ENCODE measurements at regions of chr1 and their contacts with region 1.

Region 1: DNA sequence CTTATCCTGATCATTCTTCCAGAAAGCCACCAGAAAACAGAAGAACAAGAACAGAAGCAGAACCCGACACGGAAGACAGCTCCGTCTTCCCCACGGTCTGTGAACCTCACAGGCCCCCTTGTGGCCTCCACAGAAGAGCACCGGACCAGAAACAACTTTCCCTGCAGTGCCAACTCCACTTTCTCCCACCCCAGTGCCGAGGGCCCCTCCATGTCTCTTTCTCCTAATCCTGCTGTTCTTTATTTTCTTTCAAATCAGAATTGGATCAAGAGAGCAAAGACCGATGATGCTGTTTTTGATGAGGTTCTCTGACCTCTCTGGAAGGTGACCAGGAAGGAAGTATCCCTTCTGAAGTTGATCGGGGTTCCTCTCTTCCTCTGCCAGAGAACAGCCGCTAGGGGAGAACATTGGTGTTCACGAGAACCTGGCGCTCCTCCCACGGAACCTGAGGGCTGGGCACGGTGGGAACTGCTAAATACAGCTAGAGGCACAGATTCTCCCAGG is 58.9 kb upstream of the CTTNBP2NL start:
- DNase-seq: peak in 1 of 2 donors; percentile 34
- ATAC-seq: peak in 1 of 2 donors; percentile 68
- H3K4me3 ChIP-seq: no peak overlapping the region
- H3K27ac ChIP-seq: no peak overlapping the region
- H3K4me1 ChIP-seq: no peaks in the 10 kb centered on the region
- H3K27me3 ChIP-seq: peaks cover 0 to 4% (median 0%) of the 10 kb centered on the region in 3 donors
- CTCF ChIP-seq: peak; percentile 14 to 51 (median 38)
- POLR2A ChIP-seq: no peak

Region 2: GRCh38 chr1:111789666-111790316 is 547.3 kb before region 1 on chr1:
- in situ Hi-C with region 1: loop called in 2 of 4 experiments (anchors 10 to 25 kb)
- intact Hi-C with region 1: no loop called
- DNase-seq: no peak
- ATAC-seq: peak in 1 of 2 donors; percentile 78
- H3K4me3 ChIP-seq: no peak overlapping the region
- H3K27ac ChIP-seq: peak overlapping the region in 1 of 4 donors; percentile 16
- H3K4me1 ChIP-seq: no peaks in the 10 kb centered on the region
- H3K27me3 ChIP-seq: no peaks in the 10 kb centered on the region
- CTCF ChIP-seq: no peak
- POLR2A ChIP-seq: no peak

Region 3: GRCh38 chr1:111813521-111814304 is 523.4 kb before region 1 on chr1:
- in situ Hi-C with region 1: loop called in 1 of 4 experiments (anchors 25 kb)
- intact Hi-C with region 1: no loop called
- DNase-seq: no peak
- ATAC-seq: no peak
- H3K4me3 ChIP-seq: no peak overlapping the region
- H3K27ac ChIP-seq: no peak overlapping the region
- H3K4me1 ChIP-seq: no peaks in the 10 kb centered on the region
- H3K27me3 ChIP-seq: no peaks in the 10 kb centered on the region
- CTCF ChIP-seq: no peak
- POLR2A ChIP-seq: no peak

Region 4: GRCh38 chr1:112209488-112209887 is 127.6 kb before region 1 on chr1:
- in situ Hi-C with region 1: no loop called
- intact Hi-C with region 1: no loop called
- DNase-seq: no peak
- ATAC-seq: no peak
- H3K4me3 ChIP-seq: no peak overlapping the region
- H3K27ac ChIP-seq: no peak overlapping the region
- H3K4me1 ChIP-seq: no peaks in the 10 kb centered on the region
- H3K27me3 ChIP-seq: no peaks in the 10 kb centered on the region
- CTCF ChIP-seq: no peak
- POLR2A ChIP-seq: no peak

Region 5: DNA sequence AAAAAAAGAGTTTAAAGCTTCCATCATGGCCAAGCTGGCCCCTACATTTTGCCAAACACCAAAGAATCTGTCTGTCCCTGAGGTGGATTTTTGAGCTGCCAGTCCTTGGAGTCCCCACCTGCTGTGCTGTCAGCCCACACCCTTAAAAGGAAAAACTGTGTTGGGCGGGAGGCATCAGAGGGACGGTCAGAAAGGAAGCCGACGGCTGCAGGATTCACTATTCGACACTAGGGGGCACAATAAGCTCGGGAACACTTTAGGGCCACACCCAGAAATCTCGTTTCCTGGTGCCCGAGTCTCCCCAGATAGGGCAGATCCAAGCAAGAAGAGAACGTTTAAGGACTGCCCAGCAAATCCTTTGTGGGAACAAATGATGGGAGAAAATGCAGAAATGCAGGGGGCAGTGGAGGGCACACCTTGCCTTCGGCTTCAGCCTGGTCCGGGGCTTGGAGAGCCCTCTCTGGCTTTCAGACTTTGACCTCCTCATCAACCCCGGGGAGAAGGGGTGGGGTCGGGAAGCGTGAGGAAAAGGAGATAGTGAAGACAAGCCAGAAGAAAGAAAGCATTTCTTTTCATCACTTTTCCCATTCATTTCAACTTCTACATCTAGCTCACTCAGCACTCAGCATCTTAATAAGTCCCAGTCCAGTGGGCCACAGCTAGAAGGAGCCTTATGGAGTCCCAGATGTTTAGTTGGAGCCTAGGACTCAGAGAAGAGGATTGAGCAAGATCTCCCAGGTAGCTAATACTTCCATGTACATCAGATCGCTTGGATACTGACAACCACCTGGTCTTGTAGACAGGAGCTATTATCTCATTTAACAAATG is 53.9 kb after region 1 on chr1:
- in situ Hi-C with region 1: no loop called
- intact Hi-C with region 1: no loop called
- DNase-seq: peak; percentile 70 to 84
- ATAC-seq: peak; percentile 92
- H3K4me3 ChIP-seq: peak overlapping the region; percentile 39 to 64 (median 49)
- H3K27ac ChIP-seq: peak overlapping the region; percentile 58 to 91 (median 80)
- H3K4me1 ChIP-seq: peaks cover 20% of the 10 kb centered on the region in 2 donors
- H3K27me3 ChIP-seq: no peaks in the 10 kb centered on the region
- CTCF ChIP-seq: peak; percentile 88 to 93 (median 91)
- POLR2A ChIP-seq: peak in 1 of 2 donors; percentile 22

Measured in gastrocnemius medialis (tissue), 4 donors.